ENCODE measurements at regions of chr1 and their contacts with region 1.

Region 1: DNA sequence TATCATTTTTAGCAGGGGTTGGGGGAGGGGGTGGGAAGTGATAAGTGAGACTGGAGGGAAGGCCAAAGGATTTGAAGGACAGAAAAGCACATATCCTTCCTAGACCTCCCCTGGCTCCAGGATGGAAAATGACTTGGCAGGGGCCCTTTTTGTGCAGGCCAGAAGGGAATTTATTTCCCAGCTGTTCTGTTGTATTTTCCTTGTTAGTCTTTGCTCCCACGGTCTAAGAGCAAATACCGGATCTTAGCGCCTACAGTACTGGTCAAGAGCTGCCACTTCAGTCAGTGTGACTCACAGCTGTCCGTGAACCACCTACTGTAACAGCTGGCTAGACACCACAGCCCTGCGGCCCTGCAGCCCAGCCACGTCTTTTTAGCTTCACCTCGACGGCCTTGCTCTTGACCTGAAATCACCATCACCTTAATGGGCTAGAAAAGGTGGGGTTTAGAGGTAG is 51.0 kb upstream of the ERRFI1 start:
- DNase-seq: peak; percentile 91
- H3K4me3 Mint-ChIP-seq: no peak overlapping the region
- H3K27ac Mint-ChIP-seq: peak overlapping the region; percentile 89
- H3K4me1 Mint-ChIP-seq: peaks cover 59% of the 10 kb centered on the region
- H3K27me3 Mint-ChIP-seq: no peaks in the 10 kb centered on the region
- CTCF ChIP-seq: no peak

Region 2: GRCh38 chr1:8040586-8040985 is 36.6 kb before region 1 on chr1:
- CTCF ChIA-PET with region 1: interaction called, 3 read pairs
- POLR2A ChIA-PET with region 1: interaction called, 28 read pairs
- intact Hi-C with region 1: no loop called
- DNase-seq: peak; percentile 99
- H3K4me3 Mint-ChIP-seq: no peak overlapping the region
- H3K27ac Mint-ChIP-seq: peak overlapping the region; percentile 66
- H3K4me1 Mint-ChIP-seq: peaks cover 30% of the 10 kb centered on the region
- H3K27me3 Mint-ChIP-seq: no peaks in the 10 kb centered on the region
- CTCF ChIP-seq: no peak

Region 3: GRCh38 chr1:8090241-8090702 is 13.1 kb after region 1 on chr1:
- CTCF ChIA-PET with region 1: interaction called, 3 read pairs
- POLR2A ChIA-PET with region 1: interaction called, 114 read pairs
- intact Hi-C with region 1: no loop called
- DNase-seq: peak; percentile 49
- H3K4me3 Mint-ChIP-seq: no peak overlapping the region
- H3K27ac Mint-ChIP-seq: peak overlapping the region; percentile 91
- H3K4me1 Mint-ChIP-seq: peaks cover 55% of the 10 kb centered on the region
- H3K27me3 Mint-ChIP-seq: no peaks in the 10 kb centered on the region
- CTCF ChIP-seq: no peak

Region 4: DNA sequence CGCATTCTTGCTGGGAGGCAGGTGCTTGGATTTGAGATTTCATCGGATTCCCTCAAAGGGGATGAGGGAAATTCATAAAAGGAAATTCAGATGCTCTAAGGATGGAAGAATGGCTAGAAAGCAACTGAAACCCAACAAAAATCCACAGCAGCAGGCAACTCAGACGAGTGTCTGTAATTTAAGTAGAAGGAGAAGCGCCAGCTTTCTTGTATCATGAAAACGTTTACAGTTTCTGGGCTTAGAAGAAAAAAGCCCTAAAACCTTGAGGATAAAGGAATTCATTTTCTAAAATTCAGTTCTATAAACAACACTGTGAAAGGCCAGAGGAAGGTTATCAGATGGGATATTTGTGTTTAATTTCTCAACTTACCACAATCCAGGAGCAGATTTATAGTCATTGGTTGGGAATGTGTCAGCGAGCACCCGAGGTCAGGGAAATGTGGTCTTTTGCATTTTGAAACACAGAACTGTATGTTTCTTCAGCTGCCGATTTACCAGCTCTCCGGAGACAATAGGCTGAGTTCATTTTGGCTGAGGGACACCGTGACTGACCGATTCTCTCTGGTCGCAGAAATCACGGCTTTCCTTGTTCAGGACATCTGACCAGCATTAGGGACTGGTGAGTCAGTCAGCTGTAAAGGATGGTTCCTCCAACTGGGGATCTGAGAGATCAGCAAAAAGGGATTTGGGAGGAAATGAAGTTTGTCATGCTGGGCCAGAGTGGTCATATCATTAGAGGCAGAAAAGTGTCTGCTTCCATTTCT is 60.5 kb after region 1 on chr1:
- CTCF ChIA-PET with region 1: interaction called, 4 read pairs
- POLR2A ChIA-PET with region 1: interaction called, 109 read pairs
- intact Hi-C with region 1: no loop called
- DNase-seq: peak; percentile 85
- H3K4me3 Mint-ChIP-seq: peak overlapping the region; percentile 55
- H3K27ac Mint-ChIP-seq: peak overlapping the region; percentile 93
- H3K4me1 Mint-ChIP-seq: peaks cover 44% of the 10 kb centered on the region
- H3K27me3 Mint-ChIP-seq: no peaks in the 10 kb centered on the region
- CTCF ChIP-seq: no peak

Region 5: DNA sequence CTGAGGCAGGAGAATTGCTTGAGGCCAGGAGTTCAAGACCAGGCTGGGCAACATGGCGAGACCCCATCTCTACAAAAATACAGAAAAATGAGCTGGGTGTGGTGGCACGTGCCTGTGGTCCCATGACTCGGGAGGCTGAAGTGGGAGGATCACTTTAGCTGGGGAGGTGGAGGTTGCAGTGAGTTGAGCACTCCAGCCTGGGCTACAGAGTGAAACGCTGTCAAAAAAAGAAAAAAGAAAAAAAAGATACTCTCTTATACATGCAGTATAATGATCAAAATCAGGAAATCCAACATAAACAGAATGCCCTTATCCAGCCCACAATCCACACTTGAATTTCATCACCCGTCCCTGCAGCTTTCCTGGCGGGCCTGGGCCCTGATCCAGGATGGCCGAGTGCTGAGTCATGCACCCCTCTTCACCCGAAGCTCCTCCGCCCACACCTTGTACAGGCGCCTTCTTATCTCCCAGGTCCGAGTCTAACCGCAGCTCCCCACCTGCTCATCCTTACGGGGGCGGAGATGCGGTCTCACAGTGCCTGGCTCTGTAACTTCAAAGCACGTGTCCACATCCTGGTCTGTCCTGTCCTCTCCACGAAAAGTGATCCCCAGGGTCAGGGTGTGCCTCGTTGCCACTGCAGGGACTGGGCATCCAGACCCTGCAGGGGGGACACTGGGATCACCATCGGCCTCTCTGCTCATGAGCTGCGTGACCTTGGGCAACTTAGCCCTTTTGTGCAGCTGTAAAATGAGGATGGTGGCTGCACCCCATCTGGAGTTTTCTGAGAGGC is 120.5 kb after region 1 on chr1:
- CTCF ChIA-PET with region 1: interaction called, 3 read pairs
- POLR2A ChIA-PET with region 1: interaction called, 35 read pairs
- intact Hi-C with region 1: no loop called
- DNase-seq: peak; percentile 97
- H3K4me3 Mint-ChIP-seq: peak overlapping the region; percentile 24
- H3K27ac Mint-ChIP-seq: peak overlapping the region; percentile 77
- H3K4me1 Mint-ChIP-seq: peaks cover 64% of the 10 kb centered on the region
- H3K27me3 Mint-ChIP-seq: no peaks in the 10 kb centered on the region
- CTCF ChIP-seq: no peak

Measured in MCF 10A (cell line).